ENCODE measurements at regions of chr7 and their contacts with region 1.

Region 1: GRCh38 chr7:27095897-27096767 is at the start of gene HOXA1:
- H3K4me3 ChIP-seq: peak within 1 kb of the TSS; percentile 79
- H3K27ac ChIP-seq: peak within 1 kb of the TSS; percentile 98
- H3K4me1 ChIP-seq: peaks cover 40% of the 10 kb centered on the region
- CTCF ChIP-seq: 0 out of 2 replicates have a peak, but pooled peaks have one; percentile 15

Region 2: DNA sequence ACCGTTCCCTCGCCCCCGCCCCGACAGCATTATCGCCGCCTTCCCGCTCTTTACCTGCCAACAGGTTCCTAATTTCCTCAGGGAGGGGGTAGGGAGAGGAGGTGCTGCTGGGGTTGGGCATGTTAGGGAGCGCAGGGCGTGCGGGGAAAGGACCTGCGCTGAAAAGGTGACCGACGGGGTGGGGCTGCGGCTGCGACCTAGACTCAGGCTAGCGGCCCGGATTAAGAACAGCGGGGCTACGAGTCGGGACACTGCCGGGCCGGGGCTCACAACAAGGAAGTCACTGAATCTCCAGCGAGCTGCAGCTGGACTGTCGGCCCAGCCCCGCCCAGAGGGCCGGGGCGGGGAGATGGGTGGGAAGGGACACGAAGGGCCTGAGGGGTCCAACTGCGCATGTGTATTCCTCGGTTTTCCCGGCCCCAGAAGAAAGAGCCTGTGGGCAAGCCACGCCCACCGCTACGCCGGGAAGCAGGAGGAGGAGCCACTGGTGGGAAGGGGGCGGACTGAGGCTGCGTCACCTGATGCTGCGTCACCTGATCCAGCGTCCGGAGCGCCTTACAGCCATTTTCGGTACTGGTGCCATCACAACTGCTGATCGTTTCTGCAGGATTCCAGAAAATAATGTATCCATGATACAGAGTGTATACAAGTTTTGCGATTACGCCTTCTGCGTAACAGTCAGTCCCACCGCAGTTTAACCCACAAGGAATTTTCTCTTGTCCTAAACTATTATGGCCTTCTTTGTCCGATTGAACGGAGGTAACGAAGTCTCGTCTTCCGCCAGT is 231.6 kb before region 1 on chr7 and contains the start of gene SKAP2:
- CTCF ChIA-PET with region 1: interaction called, 4 read pairs
- POLR2A ChIA-PET with region 1: interaction called, 19 read pairs
- H3K4me3 ChIP-seq: peak within 1 kb of the TSS; percentile 89
- H3K27ac ChIP-seq: peak within 1 kb of the TSS; percentile 94
- H3K4me1 ChIP-seq: peaks cover 17% of the 10 kb centered on the region
- CTCF ChIP-seq: no peak

Region 3: DNA sequence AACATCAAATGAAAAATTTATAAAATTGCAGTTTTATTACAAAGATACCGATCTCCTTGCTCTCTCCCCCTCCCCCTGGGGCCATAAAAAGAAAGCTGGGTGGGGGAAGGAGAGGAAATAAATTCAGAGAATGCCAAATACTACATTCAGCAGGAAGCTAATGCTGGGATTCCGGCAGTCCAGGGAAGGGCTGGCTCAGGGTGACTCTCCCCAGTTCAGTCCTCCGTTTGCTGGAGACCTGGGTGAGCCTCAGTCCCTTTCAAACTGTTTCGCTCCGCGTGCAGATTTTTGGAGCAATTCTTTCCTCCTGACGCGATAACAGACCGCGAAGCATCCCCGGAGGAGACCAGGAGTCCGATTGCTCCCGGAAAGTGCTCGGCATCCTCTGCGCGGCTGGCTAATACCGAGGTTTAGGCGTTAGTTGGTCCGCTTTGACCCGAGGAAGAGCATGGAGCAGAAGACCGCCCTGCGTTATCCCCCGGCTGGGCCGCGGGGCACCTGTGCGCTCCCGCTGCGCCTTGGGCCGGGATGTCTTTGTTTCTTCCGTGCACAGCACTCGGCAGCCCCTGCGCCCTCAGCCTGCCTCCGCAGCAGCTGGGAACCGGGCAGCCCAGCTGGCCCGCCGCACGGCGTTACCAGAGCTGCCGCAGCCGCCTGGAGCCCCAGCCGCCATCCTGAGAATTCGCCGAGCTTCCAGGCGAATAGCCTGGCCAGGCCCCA is 10.2 kb after region 1 on chr7:
- CTCF ChIA-PET with region 1: interaction called, 11 read pairs
- POLR2A ChIA-PET with region 1: interaction called, 31 read pairs
- H3K4me3 ChIP-seq: no peak overlapping the region
- H3K27ac ChIP-seq: no peak overlapping the region
- H3K4me1 ChIP-seq: no peaks in the 10 kb centered on the region; the same call in none of the 2 replicates
- CTCF ChIP-seq: no peak

Region 4: DNA sequence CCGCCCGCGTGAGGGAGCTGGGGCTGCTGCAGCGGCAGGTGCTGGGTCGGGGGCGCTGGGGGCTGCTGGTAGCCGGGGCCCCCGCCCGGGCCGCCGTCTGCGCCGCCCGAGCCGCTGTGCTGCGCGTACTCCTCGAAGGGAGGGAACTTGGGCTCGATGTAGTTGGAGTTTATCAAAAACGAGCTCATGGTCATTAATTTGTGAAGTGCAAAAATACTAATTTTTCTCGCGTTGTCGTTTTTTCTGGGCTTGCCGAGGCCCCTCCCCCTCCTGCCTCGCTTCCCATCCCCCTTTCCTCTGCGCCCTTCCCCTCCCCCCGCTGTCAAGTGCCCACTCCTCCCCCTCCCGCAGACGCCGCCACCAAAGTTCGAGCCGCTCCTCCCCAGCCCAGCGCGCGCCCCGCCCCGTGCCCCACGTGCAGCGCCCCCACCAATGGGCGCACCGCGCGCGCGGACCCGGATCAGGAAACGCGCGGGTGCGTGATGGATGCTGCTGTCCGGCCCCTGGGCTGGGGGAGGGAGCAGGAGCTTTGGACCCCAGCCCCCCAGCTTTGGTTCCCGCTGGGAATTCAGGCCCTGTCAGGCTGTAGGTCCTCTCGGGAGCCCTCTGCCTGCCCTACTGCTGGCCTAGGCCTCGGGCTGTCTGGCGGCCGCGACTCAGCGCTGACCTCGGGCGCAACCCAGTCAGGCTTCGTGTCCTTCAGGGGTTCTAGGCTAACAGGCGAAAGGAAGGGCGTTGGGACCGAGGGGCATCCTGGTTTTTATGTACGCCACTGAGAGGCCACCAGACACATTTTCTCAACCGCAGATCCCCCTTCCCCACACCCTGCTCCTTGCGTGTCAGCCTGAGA is 34.6 kb after region 1 on chr7 and contains the start of gene HOXA4:
- CTCF ChIA-PET with region 1: interaction called, 6 read pairs
- POLR2A ChIA-PET with region 1: interaction called, 23 read pairs
- H3K4me3 ChIP-seq: peak within 1 kb of the TSS; percentile 52
- H3K27ac ChIP-seq: peak within 1 kb of the TSS; percentile 100
- H3K4me1 ChIP-seq: peaks cover 78% of the 10 kb centered on the region
- CTCF ChIP-seq: no peak; the same call in 1 of the 2 replicates

Measured in HEK293 (cell line).